T-cell (primary cell): ENCODE measurements at regions of chr14 and their contacts with region 1.

Region 1: DNA sequence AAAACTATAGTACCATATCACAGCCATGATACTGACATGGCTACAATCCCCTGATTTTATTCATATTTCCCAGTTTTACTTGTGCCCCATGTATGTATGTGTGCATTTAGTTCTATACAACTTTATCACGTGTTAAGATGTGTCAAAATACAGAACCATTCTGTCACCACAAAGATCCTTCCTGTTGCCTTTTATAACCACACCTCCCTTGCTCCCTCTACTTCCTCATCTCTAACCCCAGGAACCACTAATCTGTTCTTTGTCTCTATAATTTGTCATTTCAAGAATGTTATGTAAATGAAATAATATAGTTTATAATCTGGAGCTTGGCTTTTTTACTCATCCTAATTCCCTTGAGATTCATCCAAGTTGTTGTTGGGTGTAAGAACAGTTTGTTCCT is 358.4 kb downstream of the DPF3 start:
- DNase-seq: peak in 1 of 35 experiments; percentile 49
- ATAC-seq: peak; percentile 70 to 87 (median 74)
- H3K4me3 ChIP-seq: no peak overlapping the region
- H3K4me3 Mint-ChIP-seq: peak overlapping the region in 1 of 3 donors; percentile 56
- H3K27ac ChIP-seq: no peak overlapping the region
- H3K27ac Mint-ChIP-seq: peak overlapping the region in 1 of 2 donors; percentile 4
- H3K4me1 ChIP-seq: peaks cover 16 to 46% of the 10 kb centered on the region in 2 experiments
- H3K4me1 Mint-ChIP-seq: peaks cover 62 to 74% (median 67%) of the 10 kb centered on the region in 3 donors
- H3K27me3 ChIP-seq: peaks cover 0 to 10% of the 10 kb centered on the region in 2 experiments
- H3K27me3 Mint-ChIP-seq: no peaks in the 10 kb centered on the region

Region 2: GRCh38 chr14:72884386-72884785 is 348.9 kb after region 1 on chr14:
- CTCF ChIA-PET with region 1: interaction called, 5 to 10 read pairs
- POLR2A ChIA-PET with region 1: no interaction called
- DNase-seq: no peak
- ATAC-seq: no peak
- H3K4me3 ChIP-seq: no peak overlapping the region
- H3K4me3 Mint-ChIP-seq: no peak overlapping the region
- H3K27ac ChIP-seq: no peak overlapping the region
- H3K27ac Mint-ChIP-seq: no peak overlapping the region
- H3K4me1 ChIP-seq: no peaks in the 10 kb centered on the region
- H3K4me1 Mint-ChIP-seq: peaks cover 0 to 2% (median 0%) of the 10 kb centered on the region in 3 donors
- H3K27me3 ChIP-seq: peaks cover 0 to 6% of the 10 kb centered on the region in 2 experiments
- H3K27me3 Mint-ChIP-seq: peaks cover 0 to 11% of the 10 kb centered on the region in 2 donors